ENCODE measurements at regions of chr7 and their contacts with region 1.

Region 1: DNA sequence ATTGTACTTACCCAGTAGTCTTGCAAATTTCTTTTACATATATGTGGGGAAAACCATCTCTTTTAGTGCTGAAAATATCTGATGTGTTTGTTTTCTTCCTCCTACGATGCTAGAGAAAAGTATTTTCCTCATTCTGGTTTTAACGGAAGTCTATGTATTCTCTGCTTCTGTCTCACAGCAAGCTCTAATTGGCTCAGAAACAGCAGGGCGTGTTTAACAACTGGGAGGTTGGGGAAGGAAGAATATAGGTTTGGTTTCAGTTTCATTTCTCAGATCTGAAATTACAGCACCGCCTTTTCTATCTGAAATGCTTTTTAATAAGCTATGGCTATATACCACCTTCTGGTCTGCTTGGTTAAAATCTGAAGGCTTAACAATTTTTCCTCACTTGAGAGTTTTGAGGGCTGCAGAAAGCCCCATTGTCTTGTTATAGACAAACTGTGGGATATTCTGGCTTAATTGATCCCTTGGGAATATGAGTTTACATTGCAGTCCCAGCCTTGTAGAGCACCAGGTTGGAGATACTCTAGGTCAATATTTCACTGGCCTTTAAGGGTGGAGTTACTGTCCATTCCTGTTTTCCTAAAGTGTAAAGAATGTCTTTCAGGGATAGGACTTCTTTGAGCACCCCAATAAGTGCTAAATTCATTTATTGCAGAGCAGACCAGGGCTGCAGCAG is at the start of gene SAMD9:
- DNase-seq: peak in 8 of 9 donors; percentile 28 to 85 (median 78)
- ATAC-seq: peak; percentile 99
- H3K4me3 ChIP-seq: peak within 1 kb of the TSS; percentile 52
- H3K4me3 Mint-ChIP-seq: peak within 1 kb of the TSS; percentile 78 to 97 (median 92)
- H3K27ac ChIP-seq: peak within 1 kb of the TSS; percentile 82
- H3K27ac Mint-ChIP-seq: peak within 1 kb of the TSS; percentile 85 to 98 (median 93)
- H3K4me1 ChIP-seq: peaks cover 12 to 20% of the 10 kb centered on the region in 2 donors
- H3K4me1 Mint-ChIP-seq: peaks cover 38 to 56% (median 48%) of the 10 kb centered on the region in 7 donors
- H3K27me3 ChIP-seq: no peaks in the 10 kb centered on the region
- H3K27me3 Mint-ChIP-seq: no peaks in the 10 kb centered on the region
- total RNA-seq, gene SAMD9: 20.9 to 61.6 (median 47.8) TPM

Region 2: GRCh38 chr7:92134271-92135051 is 983.5 kb before region 1 on chr7 and contains the start of gene CYP51A1:
- CTCF ChIA-PET with region 1: no interaction called
- POLR2A ChIA-PET with region 1: no interaction called
- intact Hi-C with region 1: loop called in 1 of 2 experiments (anchors 1 kb)
- DNase-seq: peak; percentile 93 to 98 (median 96)
- ATAC-seq: peak; percentile 93
- H3K4me3 ChIP-seq: peak within 1 kb of the TSS; percentile 92
- H3K4me3 Mint-ChIP-seq: peak within 1 kb of the TSS; percentile 95 to 100 (median 98)
- H3K27ac ChIP-seq: peak within 1 kb of the TSS; percentile 94
- H3K27ac Mint-ChIP-seq: peak within 1 kb of the TSS; percentile 89 to 100 (median 99)
- H3K4me1 ChIP-seq: peaks cover 4 to 12% of the 10 kb centered on the region in 2 donors
- H3K4me1 Mint-ChIP-seq: peaks cover 12 to 49% (median 40%) of the 10 kb centered on the region in 7 donors
- H3K27me3 ChIP-seq: no peaks in the 10 kb centered on the region
- H3K27me3 Mint-ChIP-seq: peaks cover 0 to 2% (median 0%) of the 10 kb centered on the region in 5 donors
- total RNA-seq, gene CYP51A1: 14.7 to 36.6 (median 21.7) TPM

Region 3: DNA sequence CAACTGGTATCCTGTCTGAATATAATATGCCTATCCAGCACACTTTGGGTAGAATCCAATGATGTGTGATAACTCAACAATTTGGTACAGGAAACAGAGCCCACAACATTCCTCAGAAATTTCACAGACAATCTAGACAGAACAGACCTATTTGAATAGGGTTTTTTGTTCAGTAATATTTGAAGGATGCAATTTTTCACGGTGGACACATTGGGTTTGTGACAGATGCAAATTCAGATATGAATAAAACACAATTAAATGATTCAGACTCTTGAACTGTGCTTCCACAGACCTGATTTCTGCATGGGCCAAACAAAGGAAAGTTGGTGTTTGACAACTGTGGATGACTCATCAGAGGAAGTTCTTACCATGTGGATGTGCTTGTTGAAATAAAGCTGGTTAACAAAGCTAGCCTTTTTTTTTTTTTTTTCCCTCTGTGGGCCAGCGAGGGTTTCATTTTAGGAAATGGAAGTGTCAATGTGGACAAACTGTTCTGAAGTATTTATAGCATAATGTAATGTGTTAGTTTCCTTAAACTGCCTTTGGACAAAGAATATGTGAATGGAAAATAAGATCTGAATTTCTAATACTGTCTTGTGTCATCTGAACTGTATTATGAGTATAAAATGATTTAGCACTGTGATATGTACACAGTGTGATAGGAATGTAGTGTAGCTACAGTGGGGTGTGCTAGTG is 484.6 kb before region 1 on chr7:
- CTCF ChIA-PET with region 1: no interaction called
- POLR2A ChIA-PET with region 1: no interaction called
- intact Hi-C with region 1: loop called in 1 of 2 experiments (anchors 10 kb)
- DNase-seq: peak in 1 of 9 donors; percentile 13
- ATAC-seq: peak; percentile 76
- H3K4me3 ChIP-seq: no peak overlapping the region
- H3K4me3 Mint-ChIP-seq: peak overlapping the region in 3 of 10 donors; percentile 23 to 70 (median 57)
- H3K27ac ChIP-seq: no peak overlapping the region
- H3K27ac Mint-ChIP-seq: peak overlapping the region in 3 of 9 donors; percentile 50 to 87 (median 53)
- H3K4me1 ChIP-seq: peaks cover 3 to 18% of the 10 kb centered on the region in 2 donors
- H3K4me1 Mint-ChIP-seq: peaks cover 20 to 56% (median 34%) of the 10 kb centered on the region in 7 donors
- H3K27me3 ChIP-seq: no peaks in the 10 kb centered on the region
- H3K27me3 Mint-ChIP-seq: no peaks in the 10 kb centered on the region

Region 4: DNA sequence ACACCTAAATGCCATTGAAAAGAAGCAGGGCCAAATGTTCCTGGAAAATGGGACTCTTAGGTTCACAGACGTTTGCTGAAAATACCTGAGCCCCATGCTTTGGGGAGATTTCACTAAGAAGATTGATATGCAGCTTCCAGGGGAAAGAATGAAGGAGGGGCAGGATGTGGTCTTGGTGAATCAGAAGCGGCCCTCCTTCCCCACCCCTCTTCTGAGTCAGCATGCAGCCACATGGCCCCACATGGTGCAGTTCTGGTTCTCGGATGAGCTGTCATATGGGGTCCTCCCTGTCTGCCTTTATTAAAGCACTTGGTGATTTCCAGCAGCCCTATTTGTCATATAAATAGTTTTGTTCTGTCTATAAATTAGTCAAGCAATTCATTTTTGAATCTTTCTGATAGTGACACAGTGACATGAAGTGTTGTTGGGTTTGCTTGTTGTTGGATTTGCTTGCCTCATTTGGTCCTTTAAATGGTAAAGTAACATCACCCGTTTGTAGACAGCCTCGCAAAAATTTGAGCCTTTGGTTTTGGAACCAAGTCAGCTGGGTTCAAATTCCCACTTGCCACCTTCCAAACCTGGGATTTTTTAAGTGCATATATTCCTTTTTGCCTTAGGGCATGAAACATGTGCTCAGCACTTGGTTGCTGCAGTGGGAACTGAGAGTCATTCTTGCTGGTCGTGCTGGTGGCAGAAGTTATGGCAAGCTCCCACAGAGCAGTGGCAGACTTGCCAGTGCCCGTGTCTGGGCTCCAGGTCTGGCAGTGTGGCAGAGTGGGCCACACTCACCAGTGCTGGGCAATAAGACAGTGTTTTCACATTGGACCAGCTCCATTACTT is 213.5 kb before region 1 on chr7:
- CTCF ChIA-PET with region 1: no interaction called
- POLR2A ChIA-PET with region 1: no interaction called
- intact Hi-C with region 1: loop called in 1 of 2 experiments (anchors 5 kb)
- DNase-seq: peak in 8 of 9 donors; percentile 21 to 80 (median 42)
- ATAC-seq: peak; percentile 99
- H3K4me3 ChIP-seq: no peak overlapping the region
- H3K4me3 Mint-ChIP-seq: peak overlapping the region in 1 of 10 donors; percentile 44
- H3K27ac ChIP-seq: no peak overlapping the region
- H3K27ac Mint-ChIP-seq: peak overlapping the region in 2 of 9 donors; percentile 39 to 83
- H3K4me1 ChIP-seq: peaks cover 0 to 7% of the 10 kb centered on the region in 2 donors
- H3K4me1 Mint-ChIP-seq: peaks cover 0 to 23% (median 12%) of the 10 kb centered on the region in 7 donors
- H3K27me3 ChIP-seq: no peaks in the 10 kb centered on the region
- H3K27me3 Mint-ChIP-seq: peaks cover 0 to 5% (median 0%) of the 10 kb centered on the region in 5 donors

Region 5: GRCh38 chr7:93147363-93147762 is 29.4 kb after region 1 on chr7:
- CTCF ChIA-PET with region 1: interaction called, 3 read pairs
- POLR2A ChIA-PET with region 1: interaction called, 9 read pairs
- intact Hi-C with region 1: loop called (anchors 1 kb)
- DNase-seq: peak in 8 of 9 donors; percentile 30 to 51 (median 39)
- ATAC-seq: peak; percentile 76
- H3K4me3 ChIP-seq: peak overlapping the region; percentile 68
- H3K4me3 Mint-ChIP-seq: peak overlapping the region; percentile 84 to 98 (median 94)
- H3K27ac ChIP-seq: peak overlapping the region; percentile 69
- H3K27ac Mint-ChIP-seq: peak overlapping the region; percentile 86 to 96 (median 92)
- H3K4me1 ChIP-seq: peaks cover 13 to 21% of the 10 kb centered on the region in 2 donors
- H3K4me1 Mint-ChIP-seq: peaks cover 29 to 51% (median 36%) of the 10 kb centered on the region in 7 donors
- H3K27me3 ChIP-seq: no peaks in the 10 kb centered on the region
- H3K27me3 Mint-ChIP-seq: no peaks in the 10 kb centered on the region

Region 6: GRCh38 chr7:94657771-94658693 is 1540.0 kb after region 1 on chr7:
- CTCF ChIA-PET with region 1: no interaction called
- POLR2A ChIA-PET with region 1: interaction called, 3 read pairs
- intact Hi-C with region 1: loop called in 1 of 2 experiments (anchors 5 kb)
- DNase-seq: peak; percentile 83 to 97 (median 95)
- ATAC-seq: peak; percentile 88
- H3K4me3 ChIP-seq: peak overlapping the region; percentile 85
- H3K4me3 Mint-ChIP-seq: peak overlapping the region; percentile 83 to 91 (median 88)
- H3K27ac ChIP-seq: no peak overlapping the region
- H3K27ac Mint-ChIP-seq: peak overlapping the region in 6 of 9 donors; percentile 17 to 84 (median 54)
- H3K4me1 ChIP-seq: peaks cover 15 to 16% of the 10 kb centered on the region in 2 donors
- H3K4me1 Mint-ChIP-seq: peaks cover 8 to 24% (median 17%) of the 10 kb centered on the region in 7 donors
- H3K27me3 ChIP-seq: peaks cover 14 to 21% of the 10 kb centered on the region in 2 donors
- H3K27me3 Mint-ChIP-seq: peaks cover 11 to 28% (median 23%) of the 10 kb centered on the region in 5 donors